ENCODE measurements at regions of chr5 and their contacts with region 1.

Region 1: DNA sequence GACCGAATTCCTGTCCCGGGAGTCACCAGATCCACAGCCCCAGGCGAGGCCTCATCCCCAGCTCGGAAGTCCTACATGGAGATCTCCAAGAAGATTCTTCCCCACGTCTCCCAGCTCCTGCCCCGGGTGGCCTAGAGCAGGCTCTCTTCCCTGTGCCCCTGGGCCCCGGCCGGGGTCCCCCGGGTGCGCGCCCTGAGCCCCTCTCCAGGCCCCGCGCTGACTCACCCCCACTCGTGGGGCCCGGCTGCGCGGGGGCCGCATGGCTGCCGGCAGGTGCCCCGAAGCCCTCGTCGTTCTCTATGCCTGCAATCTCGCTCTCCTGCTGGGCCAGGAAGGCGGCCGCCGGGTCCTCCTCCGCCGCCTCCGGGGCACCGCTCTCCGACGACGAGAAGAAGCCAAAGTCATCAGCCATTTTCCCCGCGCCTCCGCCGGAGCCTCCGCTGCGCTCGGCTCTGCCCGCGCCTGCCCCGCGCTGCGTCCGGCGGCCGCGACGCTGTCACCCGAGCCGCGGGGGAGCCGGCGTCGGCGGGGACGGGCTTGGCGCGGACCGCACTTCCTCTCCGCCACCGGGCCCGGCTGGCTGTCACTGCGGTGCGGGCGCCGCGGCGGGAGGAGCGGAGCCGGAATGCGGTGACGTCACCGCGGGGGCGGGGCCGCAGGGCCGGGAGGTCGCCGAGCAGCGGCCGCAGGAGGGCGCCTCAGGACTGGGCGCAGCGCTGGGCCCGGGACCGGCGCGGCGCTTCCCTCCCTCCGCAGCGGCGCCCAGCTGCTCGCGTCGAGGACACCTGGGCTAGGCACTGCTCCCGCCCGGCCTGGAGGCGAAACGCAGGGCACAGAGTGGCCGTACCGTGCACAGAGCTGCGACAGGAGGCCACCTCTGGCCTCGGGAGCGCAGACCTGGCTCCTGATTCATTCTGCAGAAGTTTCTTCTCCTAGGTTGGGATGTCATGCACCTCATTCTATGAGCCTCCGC is at the start of gene CLTB:
- DNase-seq: peak; percentile 82 to 93 (median 90)
- H3K4me3 ChIP-seq: peak within 1 kb of the TSS; percentile 82
- H3K4me3 Mint-ChIP-seq: peak within 1 kb of the TSS; percentile 81 to 92 (median 89)
- H3K27ac ChIP-seq: peak within 1 kb of the TSS; percentile 71
- H3K27ac Mint-ChIP-seq: peak within 1 kb of the TSS; percentile 81 to 96 (median 93)
- H3K4me1 ChIP-seq: peaks cover 25% of the 10 kb centered on the region
- H3K4me1 Mint-ChIP-seq: peaks cover 41 to 51% (median 42%) of the 10 kb centered on the region in 3 donors
- H3K27me3 ChIP-seq: no peaks in the 10 kb centered on the region
- H3K27me3 Mint-ChIP-seq: no peaks in the 10 kb centered on the region
- total RNA-seq, gene CLTB: 62.0 to 66.4 TPM

Region 2: DNA sequence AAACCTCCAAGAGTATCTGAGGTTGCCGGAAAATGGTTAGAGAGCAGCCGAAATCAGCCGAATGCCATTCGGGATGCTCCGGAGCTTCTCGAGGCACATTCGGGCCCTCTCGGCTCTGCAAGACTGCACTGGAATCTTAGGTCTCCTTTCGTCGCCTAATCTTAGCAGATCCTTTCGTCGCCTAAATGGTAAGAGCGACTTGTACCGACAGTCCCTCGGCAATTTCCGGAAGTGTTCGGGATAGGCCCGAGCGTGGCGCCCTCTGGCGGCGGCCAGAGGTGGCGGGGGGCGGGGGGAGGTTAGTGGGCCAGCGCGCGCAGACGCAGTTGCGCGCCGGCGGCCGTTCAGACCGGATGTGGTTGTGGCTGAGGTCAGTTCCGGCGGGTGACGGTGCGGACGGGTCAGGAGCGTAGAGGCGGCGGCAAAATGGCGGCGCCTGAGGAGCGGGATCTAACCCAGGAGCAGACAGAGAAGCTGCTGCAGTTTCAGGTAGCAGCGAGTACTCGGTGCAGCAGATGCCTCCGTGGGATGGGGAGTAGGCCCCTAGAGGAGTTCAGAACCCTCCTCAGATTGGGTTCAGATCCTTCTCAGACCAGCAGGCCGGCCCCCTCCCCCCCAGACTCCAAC is 31.9 kb after region 1 on chr5 and contains the start of gene FAF2:
- CTCF ChIA-PET with region 1: interaction called, 24 read pairs
- POLR2A ChIA-PET with region 1: interaction called, 9 read pairs
- DNase-seq: peak; percentile 92 to 99 (median 98)
- H3K4me3 ChIP-seq: peak within 1 kb of the TSS; percentile 98
- H3K4me3 Mint-ChIP-seq: peak within 1 kb of the TSS; percentile 91 to 99 (median 98)
- H3K27ac ChIP-seq: peak within 1 kb of the TSS; percentile 98
- H3K27ac Mint-ChIP-seq: peak within 1 kb of the TSS; percentile 96 to 100 (median 99)
- H3K4me1 ChIP-seq: peaks cover 25% of the 10 kb centered on the region
- H3K4me1 Mint-ChIP-seq: peaks cover 34 to 54% (median 46%) of the 10 kb centered on the region in 3 donors
- H3K27me3 ChIP-seq: no peaks in the 10 kb centered on the region
- H3K27me3 Mint-ChIP-seq: peaks cover 0 to 10% of the 10 kb centered on the region in 2 donors
- total RNA-seq, gene FAF2: 45.1 to 45.2 TPM

Region 3: DNA sequence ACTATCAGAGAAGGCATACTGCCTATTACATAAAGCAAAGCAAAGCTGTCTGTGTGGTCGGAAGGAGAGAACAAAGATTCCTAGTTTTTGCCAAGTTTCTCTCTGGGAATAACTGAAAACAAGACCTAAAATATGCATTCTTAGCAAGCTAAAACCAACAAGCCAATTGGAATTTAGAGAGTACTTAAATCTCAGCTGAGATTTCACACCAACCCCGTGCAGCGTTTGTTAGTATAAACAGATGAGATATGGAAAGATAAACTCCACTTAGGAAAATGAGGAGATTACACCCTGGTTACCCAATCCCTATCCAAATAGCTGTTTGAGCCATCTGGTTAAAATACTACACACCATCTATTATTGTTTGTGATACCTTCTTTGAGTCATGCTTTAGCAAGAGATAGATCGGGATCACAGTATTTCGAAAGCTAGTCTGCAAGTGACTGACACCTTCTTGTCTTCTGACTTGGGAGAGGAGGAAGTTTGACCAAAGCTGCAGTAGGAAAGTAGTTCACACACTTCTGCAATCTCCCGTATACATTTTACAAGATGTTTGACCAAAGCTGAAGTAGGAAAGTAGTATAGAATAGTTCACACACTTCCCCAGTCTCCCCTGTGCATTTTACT is 50.1 kb after region 1 on chr5:
- CTCF ChIA-PET with region 1: no interaction called
- POLR2A ChIA-PET with region 1: no interaction called
- DNase-seq: no peak
- H3K4me3 ChIP-seq: no peak overlapping the region
- H3K4me3 Mint-ChIP-seq: no peak overlapping the region
- H3K27ac ChIP-seq: no peak overlapping the region
- H3K27ac Mint-ChIP-seq: peak overlapping the region in 2 of 8 donors; percentile 19 to 77
- H3K4me1 ChIP-seq: no peaks in the 10 kb centered on the region
- H3K4me1 Mint-ChIP-seq: peaks cover 23 to 46% (median 42%) of the 10 kb centered on the region in 3 donors
- H3K27me3 ChIP-seq: no peaks in the 10 kb centered on the region
- H3K27me3 Mint-ChIP-seq: no peaks in the 10 kb centered on the region

Region 4: GRCh38 chr5:176537608-176538504 is 121.6 kb after region 1 on chr5:
- CTCF ChIA-PET with region 1: interaction called, 39 read pairs
- POLR2A ChIA-PET with region 1: interaction called, 24 read pairs
- DNase-seq: peak; percentile 96 to 99 (median 97)
- H3K4me3 ChIP-seq: peak overlapping the region; percentile 99
- H3K4me3 Mint-ChIP-seq: peak overlapping the region; percentile 98 to 100 (median 99)
- H3K27ac ChIP-seq: peak overlapping the region; percentile 100
- H3K27ac Mint-ChIP-seq: peak overlapping the region; percentile 98 to 100 (median 99)
- H3K4me1 ChIP-seq: peaks cover 74% of the 10 kb centered on the region
- H3K4me1 Mint-ChIP-seq: peaks cover 72 to 77% (median 76%) of the 10 kb centered on the region in 3 donors
- H3K27me3 ChIP-seq: no peaks in the 10 kb centered on the region
- H3K27me3 Mint-ChIP-seq: peaks cover 0 to 9% of the 10 kb centered on the region in 2 donors

Region 5: DNA sequence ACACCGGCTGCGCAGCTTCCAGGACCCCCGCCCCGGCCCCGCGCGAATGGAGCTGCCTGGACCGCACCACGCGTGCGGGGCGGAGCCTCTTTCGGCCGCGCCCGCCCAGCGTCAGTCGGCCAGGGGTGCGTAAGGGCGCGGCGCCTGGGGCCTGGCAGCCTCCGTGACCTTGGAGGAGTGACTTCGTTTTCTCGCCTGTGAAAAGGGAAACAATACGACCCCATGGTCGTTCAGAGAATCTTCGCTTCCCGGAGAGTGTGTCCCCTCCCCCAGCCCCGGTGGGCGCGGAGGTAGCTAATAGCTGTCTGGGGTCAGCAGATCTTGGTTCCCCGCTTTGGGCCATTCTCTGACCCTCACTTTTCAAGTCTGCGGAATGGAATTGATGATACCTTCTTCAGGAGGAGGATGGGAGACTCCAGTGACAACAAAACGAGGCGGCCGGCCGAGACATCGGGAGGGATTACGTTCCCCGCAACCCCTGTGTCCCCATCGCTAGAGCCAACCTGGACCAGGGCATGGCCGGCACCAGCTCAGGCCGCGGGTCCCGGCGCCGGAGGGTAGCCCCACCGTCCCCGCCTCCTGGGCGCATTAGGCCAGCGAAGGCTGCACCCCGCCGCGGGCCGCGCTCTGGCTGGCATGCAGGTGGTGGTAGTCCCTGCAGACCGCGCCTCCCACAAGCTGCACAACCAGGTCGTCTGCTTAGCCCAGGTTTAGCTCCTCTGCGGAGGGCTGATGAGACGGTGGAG is 127.4 kb after region 1 on chr5:
- CTCF ChIA-PET with region 1: interaction called, 39 read pairs
- POLR2A ChIA-PET with region 1: interaction called, 8 read pairs
- DNase-seq: peak; percentile 60 to 82 (median 74)
- H3K4me3 ChIP-seq: peak overlapping the region; percentile 92
- H3K4me3 Mint-ChIP-seq: peak overlapping the region; percentile 92 to 97 (median 93)
- H3K27ac ChIP-seq: peak overlapping the region; percentile 85
- H3K27ac Mint-ChIP-seq: peak overlapping the region; percentile 96 to 99 (median 98)
- H3K4me1 ChIP-seq: peaks cover 69% of the 10 kb centered on the region
- H3K4me1 Mint-ChIP-seq: peaks cover 65 to 82% (median 74%) of the 10 kb centered on the region in 3 donors
- H3K27me3 ChIP-seq: no peaks in the 10 kb centered on the region
- H3K27me3 Mint-ChIP-seq: peaks cover 0 to 1% of the 10 kb centered on the region in 2 donors

Region 6: DNA sequence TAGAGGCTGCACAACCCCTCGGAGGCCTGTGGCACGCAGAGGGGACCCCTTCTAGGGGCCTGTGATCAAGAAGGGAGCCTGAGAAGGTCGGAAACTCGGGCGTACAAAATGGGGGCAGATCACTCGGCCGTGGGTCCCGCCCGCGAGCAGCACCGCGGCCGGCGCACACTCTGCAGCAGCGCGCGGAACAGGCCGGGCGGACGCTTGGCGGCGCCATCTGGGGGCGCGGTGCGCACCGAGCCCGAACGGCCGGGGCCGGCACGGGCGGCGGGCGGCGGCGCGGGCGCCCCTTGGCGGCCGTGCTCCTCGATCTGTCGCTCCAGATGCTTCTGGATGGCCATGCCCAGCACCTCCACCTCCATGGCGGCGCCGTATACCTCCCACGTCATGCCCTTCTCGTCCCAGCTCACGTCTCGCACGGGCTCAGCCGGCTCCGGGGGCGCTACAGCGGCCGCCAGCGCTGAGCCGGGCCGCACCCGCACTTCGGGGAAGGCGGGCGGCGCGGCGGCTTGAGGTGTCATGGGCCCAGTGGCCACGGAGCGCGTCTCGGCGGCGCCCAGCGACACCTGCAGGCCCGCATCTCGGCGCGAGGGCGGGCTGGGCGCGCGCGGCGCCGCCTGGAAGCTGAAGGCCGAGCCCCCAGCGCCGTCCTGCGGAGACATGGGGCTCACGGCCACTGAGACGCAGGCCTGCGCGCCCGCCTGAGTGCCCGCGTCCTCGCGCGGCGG is 180.6 kb after region 1 on chr5:
- CTCF ChIA-PET with region 1: interaction called, 24 read pairs
- POLR2A ChIA-PET with region 1: interaction called, 7 read pairs
- DNase-seq: peak; percentile 44 to 76 (median 70)
- H3K4me3 ChIP-seq: peak overlapping the region; percentile 37
- H3K4me3 Mint-ChIP-seq: peak overlapping the region; percentile 64 to 84 (median 78)
- H3K27ac ChIP-seq: no peak overlapping the region
- H3K27ac Mint-ChIP-seq: peak overlapping the region in 2 of 8 donors; percentile 52 to 70
- H3K4me1 ChIP-seq: peaks cover 6% of the 10 kb centered on the region
- H3K4me1 Mint-ChIP-seq: peaks cover 3 to 9% (median 6%) of the 10 kb centered on the region in 3 donors
- H3K27me3 ChIP-seq: no peaks in the 10 kb centered on the region
- H3K27me3 Mint-ChIP-seq: peaks cover 2 to 4% of the 10 kb centered on the region in 2 donors